ENCODE measurements at regions of chr12 and their contacts with region 1.

Region 1: DNA sequence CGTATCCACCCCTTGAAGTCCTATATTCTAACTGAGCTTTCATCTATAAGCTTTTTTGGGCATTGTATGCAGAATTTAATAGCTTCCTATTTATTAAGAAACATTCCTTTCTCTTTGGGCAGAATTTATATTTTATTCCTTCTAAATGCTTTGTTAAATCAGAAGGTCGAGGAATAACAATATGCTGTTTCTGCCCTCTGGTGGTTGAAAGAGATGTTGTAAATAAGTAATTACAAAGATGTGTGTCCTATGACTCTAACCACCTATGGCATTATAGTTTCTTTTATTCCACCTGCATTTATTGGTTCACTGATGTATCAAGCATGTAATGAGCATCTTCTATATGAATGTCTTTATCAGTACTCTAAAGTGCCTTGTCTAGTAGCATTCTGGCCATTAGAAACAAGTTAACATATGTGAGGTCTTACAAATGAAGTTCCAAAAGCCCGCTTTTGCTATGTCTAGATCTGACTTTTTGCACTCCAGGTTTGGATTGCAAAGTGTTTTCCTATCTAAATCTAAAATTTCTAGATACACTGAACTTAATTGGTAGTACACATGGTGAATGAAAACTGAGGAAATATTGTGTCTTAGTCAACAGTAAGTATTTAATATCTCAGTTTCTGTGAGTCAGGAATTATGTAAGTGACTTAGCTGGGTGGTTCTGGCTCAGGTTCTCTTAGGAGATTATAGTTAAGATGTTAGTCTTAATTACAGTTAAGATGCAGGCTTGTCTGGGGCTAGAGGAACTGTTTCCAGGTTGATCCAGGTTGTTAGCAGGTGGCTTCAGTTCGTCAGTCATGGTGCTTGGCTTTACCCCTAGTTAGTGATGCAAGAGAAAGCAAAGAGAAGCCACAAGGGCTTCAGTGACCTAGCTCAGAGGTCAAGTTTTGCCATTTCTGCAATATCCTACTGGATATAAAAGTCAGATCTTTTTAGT is 57.5 kb downstream of the PLEKHA5 start:
- DNase-seq: no peak
- H3K4me3 ChIP-seq: no peak overlapping the region
- H3K27ac ChIP-seq: no peak overlapping the region
- H3K4me1 ChIP-seq: peaks cover 0 to 13% (median 5%) of the 10 kb centered on the region in 6 donors
- H3K27me3 ChIP-seq: no peaks in the 10 kb centered on the region
- CTCF ChIP-seq: peak in 10 of 11 experiments; percentile 4 to 62 (median 44)
- POLR2A ChIP-seq: no peak

Region 2: DNA sequence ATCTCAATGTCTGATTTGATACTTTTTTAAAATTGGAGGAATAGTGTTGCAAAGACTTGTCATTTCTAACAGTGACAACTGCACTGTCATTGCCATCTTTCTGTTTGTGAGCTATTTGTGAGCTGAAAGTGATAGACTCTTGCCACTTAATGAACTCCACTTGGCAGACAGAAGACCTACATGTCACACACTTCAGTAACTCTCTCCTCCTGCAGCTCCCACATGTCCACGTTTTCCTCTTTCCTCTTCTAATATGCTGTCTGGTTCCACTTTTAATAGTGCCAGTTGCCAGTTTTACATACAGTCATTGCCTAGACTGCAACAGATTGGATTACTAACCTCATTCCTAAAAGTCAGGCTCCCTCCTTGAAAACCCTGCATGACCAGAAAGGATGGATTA is 327.6 kb before region 1 on chr12:
- intact Hi-C with region 1: loop called (anchors 5 kb)
- DNase-seq: no peak
- H3K4me3 ChIP-seq: no peak overlapping the region
- H3K27ac ChIP-seq: no peak overlapping the region
- H3K4me1 ChIP-seq: no peaks in the 10 kb centered on the region
- H3K27me3 ChIP-seq: no peaks in the 10 kb centered on the region
- CTCF ChIP-seq: no peak
- POLR2A ChIP-seq: no peak

Region 3: DNA sequence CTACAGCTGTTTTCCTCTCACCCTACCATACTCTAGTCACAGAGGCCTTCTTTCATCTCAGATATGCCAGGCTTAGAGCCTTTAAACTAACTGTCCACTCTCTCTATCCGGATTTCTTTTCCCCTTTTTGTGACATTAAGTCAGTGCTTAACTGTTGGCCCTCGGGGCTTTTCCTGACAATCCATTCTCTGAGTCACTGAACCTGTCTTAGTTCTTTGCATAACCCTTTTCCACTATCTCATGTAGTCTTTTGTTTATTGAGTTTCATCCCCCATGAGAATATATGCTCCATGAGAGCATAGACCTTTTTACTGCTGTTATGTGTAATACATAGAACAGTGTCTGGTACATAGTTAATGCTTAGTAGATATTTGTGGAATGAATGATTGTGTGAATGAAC is 11.3 kb after region 1 on chr12:
- intact Hi-C with region 1: no loop called
- DNase-seq: no peak
- H3K4me3 ChIP-seq: no peak overlapping the region
- H3K27ac ChIP-seq: no peak overlapping the region
- H3K4me1 ChIP-seq: no peaks in the 10 kb centered on the region
- H3K27me3 ChIP-seq: no peaks in the 10 kb centered on the region
- CTCF ChIP-seq: no peak
- POLR2A ChIP-seq: no peak

Region 4: GRCh38 chr12:19451196-19451595 is 264.2 kb after region 1 on chr12:
- intact Hi-C with region 1: no loop called
- DNase-seq: no peak
- H3K4me3 ChIP-seq: no peak overlapping the region
- H3K27ac ChIP-seq: peak overlapping the region in 1 of 8 donors; percentile 14
- H3K4me1 ChIP-seq: peaks cover 9 to 88% (median 41%) of the 10 kb centered on the region in 6 donors
- H3K27me3 ChIP-seq: no peaks in the 10 kb centered on the region
- CTCF ChIP-seq: no peak
- POLR2A ChIP-seq: no peak